Spleen (tissue), 13 donors: ENCODE measurements at regions of chr16 and their contacts with region 1.

Region 1: DNA sequence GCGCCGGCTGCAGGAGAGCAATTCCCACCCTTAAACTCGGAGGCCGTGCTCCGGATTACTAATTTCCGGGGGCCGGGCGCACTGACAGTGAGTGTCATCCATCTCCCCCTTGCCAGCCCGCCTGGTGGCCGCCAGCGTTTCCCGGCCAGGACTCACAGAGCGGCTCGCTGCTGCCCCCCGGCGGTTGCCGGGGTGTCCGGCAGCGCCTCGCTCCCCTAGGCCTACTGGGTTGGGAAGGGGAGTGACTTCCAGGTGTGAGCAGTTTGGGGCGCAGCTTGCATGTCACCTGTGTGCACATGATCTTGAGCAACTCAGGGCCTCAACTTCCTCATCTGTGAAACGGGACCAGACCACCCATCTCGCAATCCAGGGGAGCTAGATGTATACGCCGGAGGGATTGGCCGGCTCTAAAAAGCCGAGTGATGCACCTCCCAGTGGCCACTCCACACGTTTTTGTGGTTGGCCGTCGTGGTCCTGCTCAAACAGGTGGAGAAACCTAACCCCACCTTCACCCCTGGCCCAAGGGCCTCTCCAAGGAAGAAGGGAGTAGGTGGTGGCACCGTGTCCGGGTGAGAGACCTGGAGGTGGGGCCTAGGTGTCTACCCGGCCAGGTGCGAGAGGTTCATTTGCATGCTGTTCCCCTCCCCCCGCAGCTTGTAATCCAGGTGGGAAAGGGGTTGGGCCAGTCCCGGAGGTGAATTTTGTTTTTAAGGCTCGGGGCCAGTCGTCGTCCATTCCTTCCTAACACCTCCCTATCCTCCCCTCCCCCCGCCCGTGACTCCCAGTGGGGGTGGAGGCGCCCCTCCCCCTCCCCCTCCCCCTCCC is 2.4 kb upstream of the GSE1 start:
- DNase-seq: peak; percentile 97
- H3K4me3 ChIP-seq: peak overlapping the region; percentile 52 to 88 (median 58)
- H3K27ac ChIP-seq: peak overlapping the region in 6 of 8 donors; percentile 29 to 84 (median 78)
- H3K4me1 ChIP-seq: peaks cover 57 to 100% (median 91%) of the 10 kb centered on the region in 6 donors
- H3K27me3 ChIP-seq: peaks cover 0 to 28% (median 0%) of the 10 kb centered on the region in 7 donors
- CTCF ChIP-seq: peak; percentile 88 to 100 (median 98)
- POLR2A ChIP-seq: no peak

Region 2: GRCh38 chr16:85420501-85421337 is 190.0 kb before region 1 on chr16:
- intact Hi-C with region 1: loop called (anchors 5 kb)
- DNase-seq: peak; percentile 94
- H3K4me3 ChIP-seq: no peak overlapping the region
- H3K27ac ChIP-seq: no peak overlapping the region
- H3K4me1 ChIP-seq: peaks cover 0 to 27% (median 15%) of the 10 kb centered on the region in 6 donors
- H3K27me3 ChIP-seq: no peaks in the 10 kb centered on the region
- CTCF ChIP-seq: peak; percentile 97 to 100 (median 100)
- POLR2A ChIP-seq: no peak

Region 3: DNA sequence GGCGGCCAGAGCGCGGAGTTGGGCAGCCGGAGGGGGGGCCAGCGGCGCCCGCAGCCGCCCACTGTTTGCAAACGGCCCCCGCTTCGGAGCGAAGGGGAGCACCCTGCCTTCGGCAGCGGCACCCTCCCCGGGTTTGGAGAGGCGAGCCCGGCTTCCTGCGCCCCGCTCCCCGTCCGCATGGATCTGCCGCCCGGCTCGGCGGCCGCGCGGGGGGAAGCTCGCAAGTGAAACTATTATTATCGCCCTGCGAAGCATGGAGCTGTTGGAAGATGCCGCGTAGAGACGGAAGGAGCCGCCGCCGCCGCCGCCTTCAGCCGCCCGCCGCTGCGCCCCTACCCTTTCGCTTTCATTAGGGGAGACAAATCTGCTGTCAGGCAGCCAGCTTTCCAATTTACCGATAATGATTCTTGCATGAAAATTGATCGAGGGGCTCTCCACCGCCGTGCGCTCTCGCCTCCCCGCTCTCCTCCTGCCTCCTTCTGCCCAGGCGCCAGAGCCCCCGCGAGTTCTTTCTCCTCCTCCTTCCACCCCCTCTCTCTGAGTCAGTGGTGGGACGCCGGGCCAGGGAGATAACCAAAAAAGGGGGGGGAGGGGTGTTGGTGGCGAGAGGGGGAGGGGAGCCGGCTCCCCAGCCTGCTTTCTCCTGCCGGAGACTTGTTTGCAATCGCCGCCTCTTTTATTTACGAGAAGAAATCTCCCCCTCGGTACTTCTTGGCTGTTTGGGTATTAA is 55.7 kb before region 1 on chr16:
- intact Hi-C with region 1: loop called (anchors 5 kb)
- DNase-seq: peak; percentile 90
- H3K4me3 ChIP-seq: peak overlapping the region; percentile 70 to 97 (median 86)
- H3K27ac ChIP-seq: peak overlapping the region; percentile 90 to 98 (median 93)
- H3K4me1 ChIP-seq: peaks cover 26 to 88% (median 55%) of the 10 kb centered on the region in 6 donors
- H3K27me3 ChIP-seq: no peaks in the 10 kb centered on the region
- CTCF ChIP-seq: peak in 1 of 11 experiments; percentile 13
- POLR2A ChIP-seq: no peak